ENCODE measurements at regions of chr22 and their contacts with region 1.

Region 1: DNA sequence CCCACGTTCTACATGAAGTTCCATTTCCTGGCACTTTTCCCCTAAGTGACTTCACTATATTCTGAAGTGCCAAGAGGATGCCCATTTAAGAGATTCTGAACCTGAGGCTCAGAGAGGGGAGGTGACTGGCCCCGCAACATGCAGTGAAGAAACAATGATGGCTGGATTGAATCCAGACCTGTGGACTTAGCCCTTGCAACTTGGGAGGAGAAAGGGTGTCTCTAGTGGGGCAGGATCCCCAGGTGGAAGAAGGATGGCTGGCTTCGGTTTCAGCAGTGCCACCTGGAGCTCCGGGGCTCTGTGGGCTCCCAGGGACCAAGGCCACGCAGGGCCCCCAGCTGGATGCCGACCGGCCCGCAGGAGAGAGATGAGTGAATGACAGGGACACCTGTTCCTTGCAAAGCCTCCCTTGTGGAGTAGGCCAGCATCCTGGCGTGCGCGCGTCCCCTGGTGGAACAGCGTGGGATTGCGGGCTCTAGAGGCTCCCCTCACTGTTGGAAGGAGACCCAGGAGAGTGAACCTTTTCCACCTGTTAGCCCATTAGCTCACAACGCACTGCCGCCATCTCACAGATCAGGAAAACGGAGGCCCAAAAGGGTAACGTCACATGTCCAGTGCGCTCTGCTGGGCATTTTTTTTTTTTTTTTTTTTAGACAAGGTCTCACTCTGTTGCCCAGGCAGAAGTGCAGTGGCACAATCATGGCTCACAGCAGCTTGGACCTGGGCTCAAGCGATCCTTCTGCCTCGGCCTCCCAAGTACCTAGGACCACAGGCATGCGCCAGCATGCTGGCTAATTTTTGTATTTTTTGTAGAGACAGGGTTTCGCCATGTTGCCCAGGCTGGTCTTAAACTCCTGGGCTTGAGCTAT is 104.7 kb downstream of the KIAA1671 start:
- DNase-seq: peak; percentile 90
- H3K4me3 Mint-ChIP-seq: no peak overlapping the region
- H3K27ac Mint-ChIP-seq: no peak overlapping the region
- H3K4me1 Mint-ChIP-seq: peaks cover 58% of the 10 kb centered on the region
- H3K27me3 Mint-ChIP-seq: peaks cover 3% of the 10 kb centered on the region

Region 2: DNA sequence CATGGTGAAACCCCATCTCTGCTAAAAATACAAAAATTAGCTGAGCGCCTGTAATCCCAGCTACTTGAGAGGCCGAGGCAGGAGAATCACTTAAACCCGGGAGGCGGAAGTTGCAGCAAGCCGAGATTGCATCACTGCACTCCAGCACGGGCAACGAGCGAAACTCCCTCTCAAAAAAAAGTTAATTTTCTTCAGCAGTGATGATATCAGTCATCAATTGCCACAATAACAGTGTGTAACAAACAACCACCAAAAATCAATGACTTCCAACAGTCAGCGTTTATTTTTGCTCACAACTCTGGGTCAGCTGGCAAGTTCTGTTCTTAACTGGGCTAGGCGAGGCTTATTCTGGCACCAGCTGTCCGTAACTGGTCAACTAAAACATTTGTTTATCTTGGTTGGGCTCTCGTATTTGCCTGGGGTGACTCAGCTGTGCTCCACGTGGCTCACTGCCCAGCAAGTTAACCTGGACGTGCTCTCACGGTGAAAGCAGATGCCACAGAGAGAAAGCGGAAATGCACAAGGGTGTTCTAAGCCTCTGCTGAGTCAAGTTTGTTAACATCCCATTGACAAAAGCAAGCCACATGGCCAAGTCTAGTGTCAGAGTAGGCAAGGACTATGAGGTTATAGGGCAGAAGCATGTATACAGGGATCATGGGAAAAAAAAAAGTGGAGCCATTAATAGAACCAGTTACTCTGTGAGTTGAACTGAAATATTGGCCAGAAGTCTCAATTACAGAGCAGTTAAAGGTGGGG is 162.8 kb before region 1 on chr22:
- CTCF ChIA-PET with region 1: no interaction called
- POLR2A ChIA-PET with region 1: no interaction called
- intact Hi-C with region 1: no loop called
- DNase-seq: no peak
- H3K4me3 Mint-ChIP-seq: no peak overlapping the region
- H3K27ac Mint-ChIP-seq: no peak overlapping the region
- H3K4me1 Mint-ChIP-seq: no peaks in the 10 kb centered on the region
- H3K27me3 Mint-ChIP-seq: no peaks in the 10 kb centered on the region

Region 3: DNA sequence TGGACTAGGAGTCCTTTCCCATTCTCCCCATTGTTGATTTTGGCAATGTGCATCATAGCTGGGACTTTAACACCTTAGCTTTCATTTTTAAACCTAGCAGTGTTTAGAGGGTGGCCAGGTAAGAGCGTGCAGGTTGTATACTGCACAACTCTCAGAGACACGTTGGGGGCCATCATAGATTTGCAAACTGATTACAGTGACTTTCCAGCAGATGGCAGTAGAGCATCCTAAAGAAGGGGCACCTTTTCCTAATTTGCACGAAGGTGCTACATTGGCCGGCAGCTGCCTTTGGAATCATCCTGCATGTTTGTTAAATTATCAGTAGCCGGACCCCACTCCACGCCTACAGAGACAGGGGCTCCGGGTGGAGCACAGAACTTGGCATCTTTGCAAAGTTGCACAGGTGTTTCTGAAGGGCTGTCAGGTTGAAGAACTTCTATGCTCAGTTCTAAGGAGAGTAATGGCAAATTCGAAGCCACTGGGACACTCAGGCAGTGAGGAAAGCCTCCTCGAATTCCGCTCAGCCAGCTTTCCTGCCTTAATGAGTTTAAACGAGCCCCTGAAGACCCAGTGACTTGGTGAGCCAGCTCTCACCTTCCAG is 118.4 kb before region 1 on chr22:
- CTCF ChIA-PET with region 1: interaction called, 210 read pairs
- POLR2A ChIA-PET with region 1: no interaction called
- intact Hi-C with region 1: loop called (anchors 2 kb)
- DNase-seq: peak; percentile 20
- H3K4me3 Mint-ChIP-seq: no peak overlapping the region
- H3K27ac Mint-ChIP-seq: no peak overlapping the region
- H3K4me1 Mint-ChIP-seq: no peaks in the 10 kb centered on the region
- H3K27me3 Mint-ChIP-seq: peaks cover 3% of the 10 kb centered on the region

Region 4: DNA sequence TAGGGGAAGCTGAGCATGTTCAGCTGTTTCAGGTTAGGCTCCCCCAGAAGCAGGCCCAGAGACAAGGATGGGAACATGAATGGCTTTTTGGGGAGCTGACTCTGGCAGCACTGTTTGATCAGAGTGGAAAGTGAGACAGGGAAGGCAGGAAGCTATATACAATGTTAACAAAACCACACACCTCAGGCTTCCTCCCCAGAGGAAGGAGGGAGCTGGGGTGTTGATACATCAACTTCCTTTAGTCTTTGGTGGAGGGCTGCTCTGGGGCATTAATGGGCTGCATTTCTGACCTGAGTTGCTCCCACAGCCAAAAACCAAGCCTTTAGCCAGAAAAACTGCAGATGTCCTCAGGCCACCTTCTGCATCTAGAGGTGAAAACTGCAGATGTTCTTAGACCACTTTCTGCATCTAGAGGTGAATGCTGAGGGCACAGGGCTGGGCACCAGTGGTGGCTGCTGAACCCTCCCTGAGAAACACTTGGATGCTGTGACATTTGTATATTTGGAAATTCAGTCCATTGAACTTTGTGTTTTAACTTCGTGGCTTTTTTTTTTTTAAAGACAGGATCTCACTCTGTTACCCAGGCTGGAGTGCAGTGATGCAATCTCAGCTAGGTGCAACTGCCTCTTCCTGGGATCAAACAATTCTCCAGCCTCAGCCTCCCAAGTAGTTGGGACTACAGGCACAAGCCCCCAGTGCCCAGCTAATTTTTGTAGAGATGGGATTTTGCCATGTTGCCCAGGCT is 54.8 kb before region 1 on chr22:
- CTCF ChIA-PET with region 1: no interaction called
- POLR2A ChIA-PET with region 1: no interaction called
- intact Hi-C with region 1: no loop called
- DNase-seq: no peak
- H3K4me3 Mint-ChIP-seq: no peak overlapping the region
- H3K27ac Mint-ChIP-seq: no peak overlapping the region
- H3K4me1 Mint-ChIP-seq: peaks cover 3% of the 10 kb centered on the region
- H3K27me3 Mint-ChIP-seq: peaks cover 2% of the 10 kb centered on the region

Region 5: DNA sequence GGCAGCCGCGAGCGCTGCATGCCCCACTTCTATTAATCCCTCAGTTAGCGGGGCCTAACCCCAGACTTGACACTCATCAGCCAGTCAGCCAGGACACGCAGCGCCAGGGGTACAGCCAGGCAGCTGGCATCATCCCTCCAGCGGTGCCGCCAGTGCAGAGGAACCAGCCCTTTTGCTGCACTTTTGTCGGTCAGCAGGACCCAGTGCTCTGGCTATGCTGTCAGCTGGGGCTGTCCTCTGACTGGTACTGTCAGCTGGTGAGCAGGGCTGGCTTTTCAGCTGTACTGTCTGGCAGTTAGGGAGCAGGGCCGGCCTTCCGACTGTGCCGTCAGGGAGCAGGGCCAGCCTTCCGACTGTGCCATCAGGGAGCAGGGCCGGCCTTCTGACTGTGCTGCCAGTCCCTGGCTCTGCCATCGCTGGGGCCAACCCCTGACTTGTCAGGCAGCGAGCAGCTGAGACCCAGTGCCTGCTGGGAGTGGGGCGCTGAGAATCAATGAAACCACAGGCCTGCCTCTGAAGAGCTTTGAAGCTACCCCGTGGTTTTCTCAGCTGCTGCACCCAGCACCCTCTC is 10.7 kb after region 1 on chr22:
- CTCF ChIA-PET with region 1: interaction called, 48 read pairs
- POLR2A ChIA-PET with region 1: interaction called, 9 read pairs
- intact Hi-C with region 1: loop called (anchors 1 kb)
- DNase-seq: peak; percentile 87
- H3K4me3 Mint-ChIP-seq: peak overlapping the region; percentile 81
- H3K27ac Mint-ChIP-seq: peak overlapping the region; percentile 87
- H3K4me1 Mint-ChIP-seq: peaks cover 71% of the 10 kb centered on the region
- H3K27me3 Mint-ChIP-seq: no peaks in the 10 kb centered on the region

Region 6: DNA sequence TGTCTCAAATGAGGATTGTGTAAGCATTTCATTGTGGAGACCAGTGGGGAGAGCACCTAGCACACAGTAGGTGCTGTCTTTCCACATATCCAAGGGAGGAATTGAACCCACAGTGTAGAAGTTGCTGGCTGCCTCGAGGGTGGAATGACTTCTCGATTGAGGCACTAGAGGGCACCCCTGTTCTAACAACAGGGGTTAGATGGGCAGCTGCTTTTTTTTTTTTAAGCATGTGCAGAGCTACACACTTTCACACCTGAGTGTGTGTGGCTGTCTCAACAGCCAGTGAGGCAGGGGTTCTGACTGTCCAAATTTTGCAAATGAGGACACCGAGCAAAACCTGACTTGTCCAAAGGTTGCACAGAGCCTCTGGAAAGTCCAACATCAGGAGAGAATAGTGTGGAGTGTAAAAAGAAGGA is 24.2 kb after region 1 on chr22:
- CTCF ChIA-PET with region 1: interaction called, 40 read pairs
- POLR2A ChIA-PET with region 1: interaction called, 10 read pairs
- intact Hi-C with region 1: loop called (anchors 1 kb)
- DNase-seq: peak; percentile 72
- H3K4me3 Mint-ChIP-seq: no peak overlapping the region
- H3K27ac Mint-ChIP-seq: no peak overlapping the region
- H3K4me1 Mint-ChIP-seq: peaks cover 48% of the 10 kb centered on the region
- H3K27me3 Mint-ChIP-seq: no peaks in the 10 kb centered on the region

Region 7: DNA sequence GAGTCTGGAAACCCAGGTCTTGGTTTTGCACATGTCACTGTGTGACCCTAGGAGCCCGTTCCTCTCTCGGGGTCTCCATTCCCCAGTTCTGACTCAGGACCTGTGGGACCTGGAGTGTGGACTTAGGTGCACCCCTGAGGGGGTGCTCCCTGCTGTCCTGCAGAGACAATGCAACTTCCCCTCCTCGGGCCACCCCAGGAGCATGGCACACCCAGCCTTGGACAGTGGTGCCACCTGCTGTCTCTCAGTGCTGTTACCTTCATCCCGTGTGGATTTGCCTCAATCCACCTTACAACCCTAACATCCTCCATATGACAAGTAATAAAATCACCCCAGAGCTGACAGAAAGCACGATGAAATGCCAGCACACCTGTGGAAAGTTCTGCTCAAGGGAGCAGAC is 114.9 kb after region 1 on chr22:
- CTCF ChIA-PET with region 1: interaction called, 14 read pairs
- POLR2A ChIA-PET with region 1: no interaction called
- intact Hi-C with region 1: loop called (anchors 5 kb)
- DNase-seq: peak; percentile 58
- H3K4me3 Mint-ChIP-seq: no peak overlapping the region
- H3K27ac Mint-ChIP-seq: no peak overlapping the region
- H3K4me1 Mint-ChIP-seq: no peaks in the 10 kb centered on the region
- H3K27me3 Mint-ChIP-seq: no peaks in the 10 kb centered on the region

Measured in activated CD4-positive, alpha-beta memory T cell treated with anti-CD3 and anti-CD28 coated beads for 36 hours (primary cell).